Endothelial cell of umbilical vein (primary cell): ENCODE measurements at regions of chr1 and their contacts with region 1.

Region 1: GRCh38 chr1:101474039-101474665 is 237.3 kb downstream of the S1PR1 start:
- DNase-seq: peak; percentile 19
- H3K4me3 ChIP-seq: no peak overlapping the region
- H3K27ac ChIP-seq: no peak overlapping the region
- H3K4me1 ChIP-seq: no peaks in the 10 kb centered on the region
- H3K27me3 ChIP-seq: peaks cover 6 to 8% of the 10 kb centered on the region in 2 experiments
- CTCF ChIP-seq: peak; percentile 47 to 61
- POLR2A ChIP-seq: no peak

Region 2: DNA sequence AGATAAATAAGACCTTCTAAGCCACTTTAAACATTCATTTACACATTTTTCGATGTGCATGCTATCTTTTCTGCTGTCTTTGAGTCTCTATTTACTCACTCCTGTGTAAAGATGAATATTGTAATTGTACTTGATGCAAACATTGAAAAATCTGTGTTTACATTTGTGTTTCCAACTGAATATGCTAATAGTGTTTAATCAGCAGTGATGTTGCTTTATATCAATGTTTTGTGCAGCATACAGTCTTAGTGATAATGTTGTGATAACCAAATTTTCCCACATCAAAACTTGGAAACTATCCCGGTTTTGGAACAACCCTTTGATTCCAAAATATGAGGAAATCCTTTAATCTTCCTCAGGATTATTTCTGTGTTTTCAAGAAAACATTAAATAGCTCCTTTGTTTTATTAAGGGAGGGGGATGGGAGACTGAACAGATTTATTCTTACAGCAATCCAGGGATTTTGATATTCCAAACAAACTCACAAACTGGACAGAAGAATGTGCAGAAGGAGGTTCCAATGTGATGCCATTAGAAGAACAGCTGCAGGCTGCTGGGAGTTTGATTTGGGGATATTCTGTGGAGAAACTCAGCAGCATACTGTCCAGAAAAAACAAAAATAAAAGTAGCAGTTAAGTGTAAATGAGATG is 10.7 kb after region 1 on chr1:
- CTCF ChIA-PET with region 1: interaction called, 25 read pairs
- POLR2A ChIA-PET with region 1: no interaction called
- dilution Hi-C with region 1: no loop called
- intact Hi-C with region 1: no loop called
- DNase-seq: no peak
- H3K4me3 ChIP-seq: no peak overlapping the region
- H3K27ac ChIP-seq: no peak overlapping the region
- H3K4me1 ChIP-seq: no peaks in the 10 kb centered on the region
- H3K27me3 ChIP-seq: peaks cover 1 to 13% of the 10 kb centered on the region in 2 experiments
- CTCF ChIP-seq: no peak
- POLR2A ChIP-seq: no peak

Region 3: GRCh38 chr1:101496109-101496508 is 22.0 kb after region 1 on chr1:
- CTCF ChIA-PET with region 1: no interaction called
- POLR2A ChIA-PET with region 1: no interaction called
- dilution Hi-C with region 1: no loop called
- intact Hi-C with region 1: no loop called
- DNase-seq: no peak
- H3K4me3 ChIP-seq: no peak overlapping the region
- H3K27ac ChIP-seq: no peak overlapping the region
- H3K4me1 ChIP-seq: no peaks in the 10 kb centered on the region
- H3K27me3 ChIP-seq: peaks cover 0 to 2% of the 10 kb centered on the region in 2 experiments
- CTCF ChIP-seq: no peak
- POLR2A ChIP-seq: no peak